Transverse colon (tissue), 4 donors: ENCODE measurements at regions of chr13 and their contacts with region 1.

Region 1: DNA sequence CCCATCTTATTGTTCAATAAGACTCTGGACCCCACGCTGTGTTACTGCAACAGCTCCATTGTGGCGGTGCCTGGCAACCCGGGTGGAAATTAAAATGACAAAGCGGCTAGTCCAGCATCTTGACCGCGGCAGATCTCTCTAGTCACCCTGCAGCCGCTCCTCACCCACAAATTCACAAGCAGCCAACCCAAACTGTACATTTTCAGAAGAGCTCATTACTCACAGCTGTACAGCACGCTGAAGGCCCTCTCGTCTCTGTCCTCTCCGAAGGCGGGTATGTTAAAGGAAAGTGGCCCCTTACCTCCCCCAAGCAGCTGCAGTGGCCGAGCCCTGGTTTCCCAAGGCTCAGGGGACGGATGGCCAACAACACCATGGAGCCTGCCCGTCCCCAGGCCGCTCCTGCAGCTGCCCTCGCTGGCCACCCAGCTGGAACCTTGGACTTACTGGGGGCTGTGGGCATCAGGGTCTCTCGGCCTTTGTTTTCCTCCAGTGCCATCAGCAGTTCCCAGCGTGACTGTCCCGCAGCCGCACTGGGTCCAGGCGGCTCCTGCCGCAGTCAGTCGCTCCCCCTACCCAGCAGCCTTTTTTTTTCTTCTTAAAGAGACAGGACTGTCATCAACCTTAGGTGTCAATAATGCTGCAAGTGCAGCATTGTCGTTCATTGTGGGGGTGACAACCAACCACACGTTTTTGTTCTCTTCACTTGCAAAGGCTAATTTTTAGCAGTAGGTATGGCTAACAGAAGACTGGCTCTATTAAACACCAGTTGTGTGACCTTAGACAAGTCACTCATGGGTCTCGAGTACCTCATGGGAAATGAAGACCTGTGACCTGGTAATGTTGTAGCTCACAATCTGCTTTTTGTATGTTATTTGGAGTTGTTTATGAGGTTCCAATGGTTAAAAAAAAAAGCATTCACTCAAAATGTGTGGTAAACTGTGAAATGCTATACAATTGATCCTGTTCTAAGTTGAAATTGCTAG is at the start of gene SACS:
- DNase-seq: no peak
- H3K4me3 ChIP-seq: peak within 1 kb of the TSS in 3 of 4 donors; percentile 32 to 40 (median 35)
- H3K27ac ChIP-seq: peak within 1 kb of the TSS in 3 of 4 donors; percentile 27 to 44 (median 32)
- H3K4me1 ChIP-seq: peaks cover 0 to 5% (median 0%) of the 10 kb centered on the region in 4 donors
- H3K27me3 ChIP-seq: peaks cover 21% of the 10 kb centered on the region
- CTCF ChIP-seq: no peak
- EP300 ChIP-seq: no peak
- POLR2A ChIP-seq: no peak
- total RNA-seq, gene SACS: 4.4 to 7.6 (median 5.5) TPM

Region 2: GRCh38 chr13:23375001-23375971 is 58.2 kb before region 1 on chr13:
- in situ Hi-C with region 1: no loop called
- intact Hi-C with region 1: loop called (anchors 10 kb)
- DNase-seq: peak; percentile 96
- H3K4me3 ChIP-seq: peak overlapping the region; percentile 64 to 83 (median 79)
- H3K27ac ChIP-seq: peak overlapping the region; percentile 83 to 90 (median 88)
- H3K4me1 ChIP-seq: peaks cover 0 to 28% (median 10%) of the 10 kb centered on the region in 4 donors
- H3K27me3 ChIP-seq: no peaks in the 10 kb centered on the region
- CTCF ChIP-seq: peak in 2 of 5 experiments; percentile 7 to 8
- EP300 ChIP-seq: no peak
- POLR2A ChIP-seq: no peak

Region 3: GRCh38 chr13:23399347-23399746 is 34.1 kb before region 1 on chr13:
- in situ Hi-C with region 1: no loop called
- intact Hi-C with region 1: no loop called
- DNase-seq: no peak
- H3K4me3 ChIP-seq: no peak overlapping the region
- H3K27ac ChIP-seq: no peak overlapping the region
- H3K4me1 ChIP-seq: no peaks in the 10 kb centered on the region
- H3K27me3 ChIP-seq: no peaks in the 10 kb centered on the region
- CTCF ChIP-seq: no peak
- EP300 ChIP-seq: no peak
- POLR2A ChIP-seq: no peak